Esophagus muscularis mucosa (tissue), 4 donors: ENCODE measurements at regions of chr1 and their contacts with region 1.

Region 1: GRCh38 chr1:3423245-3423829 is 31.1 kb upstream of the ARHGEF16 start:
- DNase-seq: no peak
- H3K4me3 ChIP-seq: no peak overlapping the region
- H3K27ac ChIP-seq: peak overlapping the region in 3 of 4 donors; percentile 28 to 45 (median 31)
- H3K4me1 ChIP-seq: peaks cover 13 to 33% (median 27%) of the 10 kb centered on the region in 4 donors
- H3K27me3 ChIP-seq: peaks cover 0 to 61% (median under 1%) of the 10 kb centered on the region in 4 donors
- CTCF ChIP-seq: no peak
- EP300 ChIP-seq: no peak
- POLR2A ChIP-seq: no peak

Region 2: GRCh38 chr1:2821966-2822620 is 601.2 kb before region 1 on chr1:
- intact Hi-C with region 1: loop called (anchors 10 kb)
- DNase-seq: no peak
- H3K4me3 ChIP-seq: no peak overlapping the region
- H3K27ac ChIP-seq: no peak overlapping the region
- H3K4me1 ChIP-seq: peaks cover 0 to 8% (median 7%) of the 10 kb centered on the region in 4 donors
- H3K27me3 ChIP-seq: peaks cover 0 to 85% (median 4%) of the 10 kb centered on the region in 4 donors
- CTCF ChIP-seq: peak; percentile 30 to 61 (median 43)
- EP300 ChIP-seq: no peak
- POLR2A ChIP-seq: no peak

Region 3: DNA sequence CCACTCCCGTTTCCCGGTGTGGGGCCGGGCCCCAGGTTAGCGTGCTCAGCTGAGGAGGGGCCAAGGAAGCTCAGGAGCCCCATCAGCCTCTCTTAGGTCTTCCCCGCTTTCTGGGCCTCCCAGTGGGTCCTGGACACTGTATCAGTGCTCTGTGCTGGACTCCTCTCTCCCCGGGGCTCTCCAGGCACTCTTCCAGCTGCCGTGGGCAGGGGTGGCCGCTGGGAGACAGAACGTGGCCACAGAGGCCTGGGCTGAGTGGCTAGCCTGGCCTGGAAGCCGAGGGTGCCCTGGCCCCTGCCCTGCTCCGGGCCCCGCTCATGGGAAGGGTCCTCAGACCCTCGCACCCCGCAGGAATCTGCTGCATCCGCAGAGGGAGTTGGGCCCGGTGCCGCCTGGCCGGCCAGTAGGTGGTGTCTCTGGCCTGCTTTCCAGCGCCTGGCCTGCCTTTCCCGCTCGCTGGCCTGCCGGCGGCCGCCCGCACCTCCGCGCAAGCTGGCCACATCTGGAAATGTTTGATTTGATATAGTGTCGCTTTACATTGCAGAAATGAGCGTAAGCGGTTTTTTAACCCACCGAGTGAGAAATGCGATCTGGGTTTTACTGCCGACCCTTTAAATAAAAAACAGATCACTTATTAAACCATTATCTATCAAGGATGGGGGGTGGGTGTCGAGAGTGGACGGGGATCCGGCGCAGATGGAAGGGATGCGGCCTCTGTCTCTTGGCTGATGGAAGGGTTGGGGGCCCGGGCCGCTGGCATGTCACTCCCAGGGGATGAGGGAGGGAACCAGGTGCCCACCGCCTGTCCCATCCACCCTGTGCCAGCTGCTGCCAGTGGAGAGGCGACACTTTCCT is 547.4 kb before region 1 on chr1:
- intact Hi-C with region 1: loop called (anchors 5 kb)
- DNase-seq: no peak
- H3K4me3 ChIP-seq: peak overlapping the region in 1 of 4 donors; percentile 12
- H3K27ac ChIP-seq: no peak overlapping the region
- H3K4me1 ChIP-seq: peaks cover 0 to 24% (median 19%) of the 10 kb centered on the region in 4 donors
- H3K27me3 ChIP-seq: peaks cover 0 to 85% (median 6%) of the 10 kb centered on the region in 4 donors
- CTCF ChIP-seq: peak; percentile 33 to 53 (median 43)
- EP300 ChIP-seq: no peak
- POLR2A ChIP-seq: no peak

Region 4: DNA sequence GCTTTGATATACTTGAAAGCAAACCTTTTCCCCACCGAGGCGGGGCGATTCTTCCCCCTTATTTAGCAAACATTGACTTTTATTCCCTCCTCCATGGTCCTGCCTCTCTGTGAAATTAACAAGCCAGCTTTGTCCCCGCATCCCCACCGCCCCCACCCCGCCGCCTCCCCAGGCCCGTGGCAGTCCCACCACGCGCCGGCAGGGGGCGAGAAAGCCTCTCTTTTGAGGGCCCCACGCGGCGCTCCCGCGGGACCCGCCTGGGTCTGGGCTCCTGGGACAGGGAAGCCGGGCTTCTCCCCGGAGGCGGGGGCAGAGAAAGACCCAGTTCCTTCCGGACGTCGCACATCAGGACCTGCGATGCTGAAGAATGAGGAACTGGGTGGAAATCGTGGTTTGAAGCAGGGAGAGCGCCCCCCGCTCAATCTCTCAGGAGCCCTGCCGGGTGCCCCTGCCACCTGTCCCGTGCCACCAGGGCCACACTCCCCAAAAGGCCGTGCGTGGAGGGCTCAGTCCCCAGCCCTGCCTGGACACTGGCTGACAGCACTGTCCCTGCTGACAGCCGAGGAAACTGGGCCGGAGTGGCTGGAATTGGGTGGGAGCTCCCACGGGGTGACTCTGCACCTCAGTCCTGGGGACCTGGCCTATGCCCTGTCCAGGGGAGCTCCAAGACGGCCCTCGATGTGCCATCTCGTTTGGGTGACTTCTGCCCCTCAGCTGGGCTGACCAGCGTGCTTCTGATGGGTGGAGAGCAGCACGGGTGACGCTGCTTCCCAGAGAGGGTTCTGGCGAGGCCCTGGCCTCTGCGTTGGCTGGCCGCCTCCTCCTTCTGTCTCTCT is 410.7 kb before region 1 on chr1:
- intact Hi-C with region 1: loop called (anchors 2 kb)
- DNase-seq: no peak
- H3K4me3 ChIP-seq: peak overlapping the region in 3 of 4 donors; percentile 20 to 31 (median 22)
- H3K27ac ChIP-seq: no peak overlapping the region
- H3K4me1 ChIP-seq: peaks cover 3 to 18% (median 15%) of the 10 kb centered on the region in 4 donors
- H3K27me3 ChIP-seq: peaks cover 3 to 89% (median 17%) of the 10 kb centered on the region in 4 donors
- CTCF ChIP-seq: peak; percentile 57 to 97 (median 94)
- EP300 ChIP-seq: no peak
- POLR2A ChIP-seq: no peak

Region 5: GRCh38 chr1:3069491-3070303 is 353.6 kb before region 1 on chr1:
- intact Hi-C with region 1: loop called (anchors 5 kb)
- DNase-seq: no peak
- H3K4me3 ChIP-seq: peak overlapping the region; percentile 77 to 91 (median 87)
- H3K27ac ChIP-seq: peak overlapping the region; percentile 74 to 82 (median 80)
- H3K4me1 ChIP-seq: peaks cover 18 to 68% (median 55%) of the 10 kb centered on the region in 4 donors
- H3K27me3 ChIP-seq: peaks cover 0 to 94% (median 66%) of the 10 kb centered on the region in 4 donors
- CTCF ChIP-seq: peak; percentile 21 to 37 (median 36)
- EP300 ChIP-seq: no peak
- POLR2A ChIP-seq: no peak

Region 6: DNA sequence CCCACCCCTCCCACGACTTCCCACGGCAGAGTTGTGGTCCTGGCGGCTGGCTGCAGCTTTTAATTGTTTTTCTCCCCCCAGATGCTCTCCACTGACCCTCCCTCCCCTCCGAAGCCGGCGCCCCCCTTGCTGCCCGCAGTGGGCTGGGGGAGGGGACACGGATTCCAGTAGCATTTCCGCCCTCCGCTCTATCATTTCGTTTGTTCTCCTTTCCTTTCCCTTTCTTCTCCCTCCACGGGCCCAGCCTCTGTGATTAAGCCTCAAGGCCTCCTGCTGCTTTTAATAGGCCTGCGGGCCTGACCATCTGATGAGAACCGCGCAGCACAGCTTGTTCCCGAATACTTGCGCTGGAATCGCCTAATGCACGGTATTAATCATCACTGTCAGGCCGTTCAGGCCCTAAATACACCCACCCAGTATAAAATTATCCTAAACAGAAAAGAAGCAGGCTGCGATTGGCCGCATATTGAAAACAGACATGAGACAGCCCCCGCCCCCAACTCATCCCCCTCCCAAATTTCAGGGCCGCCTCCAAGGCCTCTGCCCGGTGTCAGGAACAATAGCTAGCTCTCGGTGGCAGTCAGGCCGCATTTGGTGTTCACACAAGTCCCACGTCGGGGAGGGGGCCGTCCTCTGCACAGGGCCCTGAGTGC is 70.9 kb before region 1 on chr1:
- intact Hi-C with region 1: no loop called
- DNase-seq: peak; percentile 95
- H3K4me3 ChIP-seq: peak overlapping the region; percentile 32 to 49 (median 39)
- H3K27ac ChIP-seq: peak overlapping the region; percentile 91 to 98 (median 96)
- H3K4me1 ChIP-seq: peaks cover 47 to 69% (median 57%) of the 10 kb centered on the region in 4 donors
- H3K27me3 ChIP-seq: peaks cover 0 to 34% (median 0%) of the 10 kb centered on the region in 4 donors
- CTCF ChIP-seq: no peak
- EP300 ChIP-seq: peak; percentile 43
- POLR2A ChIP-seq: no peak

Region 7: DNA sequence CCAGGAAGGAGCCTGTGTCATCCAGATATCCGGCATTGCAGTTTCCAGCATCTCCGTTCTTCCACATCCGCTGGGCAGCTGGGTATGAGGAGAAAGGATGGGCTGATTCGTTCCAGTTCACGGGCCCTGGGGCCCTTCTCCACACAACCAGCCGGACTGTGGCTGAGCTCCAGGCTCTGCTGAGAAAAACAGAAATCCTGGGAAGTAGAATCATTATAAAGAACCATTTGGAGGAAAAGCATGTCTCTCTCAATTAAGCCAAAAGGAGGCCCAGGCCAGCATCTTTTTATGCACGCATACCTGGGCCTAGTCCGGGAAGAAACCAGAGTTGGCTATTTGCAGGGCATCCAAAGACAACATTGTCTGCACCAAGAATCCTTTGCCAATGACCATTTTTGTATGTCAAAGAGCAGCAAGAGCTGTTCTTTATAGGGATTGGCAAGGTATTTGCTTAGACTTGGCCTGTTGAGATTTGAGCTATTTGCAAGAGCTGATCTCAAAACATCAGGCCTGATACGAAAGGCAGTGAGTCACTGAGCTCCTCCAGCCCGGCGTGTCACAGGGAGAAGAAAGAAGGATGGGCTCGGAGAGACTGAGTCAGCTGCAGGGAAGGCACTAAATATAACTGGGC is 53.8 kb before region 1 on chr1:
- intact Hi-C with region 1: no loop called
- DNase-seq: no peak
- H3K4me3 ChIP-seq: no peak overlapping the region
- H3K27ac ChIP-seq: peak overlapping the region; percentile 59 to 80 (median 78)
- H3K4me1 ChIP-seq: peaks cover 27 to 46% (median 38%) of the 10 kb centered on the region in 4 donors
- H3K27me3 ChIP-seq: peaks cover 0 to 10% (median 0%) of the 10 kb centered on the region in 4 donors
- CTCF ChIP-seq: no peak
- EP300 ChIP-seq: no peak
- POLR2A ChIP-seq: no peak

Region 8: GRCh38 chr1:3444736-3445135 is 21.4 kb after region 1 on chr1:
- intact Hi-C with region 1: no loop called
- DNase-seq: no peak
- H3K4me3 ChIP-seq: no peak overlapping the region
- H3K27ac ChIP-seq: no peak overlapping the region
- H3K4me1 ChIP-seq: peaks cover 0 to 7% (median 0%) of the 10 kb centered on the region in 4 donors
- H3K27me3 ChIP-seq: peaks cover 0 to 69% (median 0%) of the 10 kb centered on the region in 4 donors
- CTCF ChIP-seq: no peak
- EP300 ChIP-seq: no peak
- POLR2A ChIP-seq: no peak

Region 9: GRCh38 chr1:3491291-3492246 is 68.2 kb after region 1 on chr1:
- intact Hi-C with region 1: no loop called
- DNase-seq: no peak
- H3K4me3 ChIP-seq: peak overlapping the region in 2 of 4 donors; percentile 1 to 4
- H3K27ac ChIP-seq: no peak overlapping the region
- H3K4me1 ChIP-seq: peaks cover 0 to 12% (median 10%) of the 10 kb centered on the region in 4 donors
- H3K27me3 ChIP-seq: peaks cover 0 to 35% (median 0%) of the 10 kb centered on the region in 4 donors
- CTCF ChIP-seq: peak in 2 of 3 experiments; percentile 96 to 100
- EP300 ChIP-seq: no peak
- POLR2A ChIP-seq: no peak